ENCODE measurements at regions of chr17 and their contacts with region 1.

Region 1: DNA sequence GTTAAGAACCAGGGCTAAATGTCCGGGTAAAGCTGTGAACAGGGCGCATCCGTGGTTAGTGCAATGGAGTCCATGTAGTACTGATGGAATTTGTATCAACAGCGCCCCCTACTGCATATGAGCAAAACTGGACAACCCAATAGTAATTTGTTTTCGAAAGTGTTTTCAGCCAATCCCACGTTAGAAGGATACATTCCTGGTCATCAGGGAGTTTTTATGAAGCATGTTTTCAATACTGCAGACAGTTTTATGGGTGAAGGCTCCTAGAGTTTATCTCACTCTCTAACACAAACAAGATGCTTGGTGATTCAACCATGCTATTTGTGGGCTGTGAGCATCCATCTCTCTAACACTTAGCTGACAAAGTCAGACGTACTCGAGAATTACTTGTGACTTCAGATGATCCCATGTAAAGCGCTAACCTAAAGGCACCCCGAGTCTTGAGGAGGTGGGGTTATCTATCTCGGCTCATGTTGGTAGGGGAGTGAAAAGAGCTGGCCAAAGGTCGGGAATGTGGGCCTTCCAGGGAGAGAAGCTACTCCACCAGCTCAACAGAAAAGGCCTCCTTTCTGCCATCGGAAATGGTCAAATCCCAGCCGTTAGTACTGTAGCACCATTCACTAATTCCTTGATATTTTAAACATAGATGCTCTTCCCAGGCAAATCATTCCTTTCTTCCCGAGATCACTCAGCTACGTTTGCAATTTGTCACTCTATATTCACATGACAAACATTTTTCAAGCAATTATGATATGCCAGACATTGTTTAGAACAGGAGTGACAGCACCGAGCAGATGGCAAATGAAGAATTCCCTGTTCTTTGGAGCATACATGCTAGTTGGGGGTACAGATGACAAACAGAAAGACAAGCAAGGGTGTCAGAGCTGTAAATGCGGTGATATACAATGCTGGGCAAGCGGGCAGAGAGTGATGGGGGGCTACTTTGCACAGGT is 46.9 kb upstream of the HNF1B start:
- DNase-seq: peak; percentile 44 to 56 (median 47)
- H3K4me3 ChIP-seq: no peak overlapping the region
- H3K4me3 Mint-ChIP-seq: no peak overlapping the region
- H3K27ac ChIP-seq: no peak overlapping the region
- H3K27ac Mint-ChIP-seq: no peak overlapping the region
- H3K4me1 ChIP-seq: no peaks in the 10 kb centered on the region
- H3K4me1 Mint-ChIP-seq: peaks cover 0 to 4% (median 0%) of the 10 kb centered on the region in 4 donors
- H3K27me3 ChIP-seq: no peaks in the 10 kb centered on the region
- H3K27me3 Mint-ChIP-seq: peaks cover 19 to 24% of the 10 kb centered on the region in 2 donors

Region 2: GRCh38 chr17:37527249-37527851 is 264.4 kb before region 1 on chr17:
- CTCF ChIA-PET with region 1: interaction called, 9 read pairs
- POLR2A ChIA-PET with region 1: no interaction called
- intact Hi-C with region 1: loop called (anchors 1 kb)
- DNase-seq: peak; percentile 25 to 50 (median 38)
- H3K4me3 ChIP-seq: no peak overlapping the region
- H3K4me3 Mint-ChIP-seq: no peak overlapping the region
- H3K27ac ChIP-seq: no peak overlapping the region
- H3K27ac Mint-ChIP-seq: peak overlapping the region in 6 of 7 donors; percentile 14 to 81 (median 65)
- H3K4me1 ChIP-seq: no peaks in the 10 kb centered on the region
- H3K4me1 Mint-ChIP-seq: peaks cover 0 to 9% (median 5%) of the 10 kb centered on the region in 4 donors
- H3K27me3 ChIP-seq: no peaks in the 10 kb centered on the region
- H3K27me3 Mint-ChIP-seq: no peaks in the 10 kb centered on the region

Region 3: GRCh38 chr17:37802712-37803416 is 11.1 kb after region 1 on chr17:
- CTCF ChIA-PET with region 1: no interaction called
- POLR2A ChIA-PET with region 1: no interaction called
- intact Hi-C with region 1: no loop called
- DNase-seq: no peak
- H3K4me3 ChIP-seq: no peak overlapping the region
- H3K4me3 Mint-ChIP-seq: no peak overlapping the region
- H3K27ac ChIP-seq: no peak overlapping the region
- H3K27ac Mint-ChIP-seq: no peak overlapping the region
- H3K4me1 ChIP-seq: no peaks in the 10 kb centered on the region
- H3K4me1 Mint-ChIP-seq: peaks cover 0 to 6% (median 0%) of the 10 kb centered on the region in 4 donors
- H3K27me3 ChIP-seq: peaks cover 5% of the 10 kb centered on the region
- H3K27me3 Mint-ChIP-seq: peaks cover 5 to 12% of the 10 kb centered on the region in 2 donors

Measured in CD4-positive, alpha-beta memory T cell (primary cell).